ENCODE measurements at regions of chr9 and their contacts with region 1.

Region 1: DNA sequence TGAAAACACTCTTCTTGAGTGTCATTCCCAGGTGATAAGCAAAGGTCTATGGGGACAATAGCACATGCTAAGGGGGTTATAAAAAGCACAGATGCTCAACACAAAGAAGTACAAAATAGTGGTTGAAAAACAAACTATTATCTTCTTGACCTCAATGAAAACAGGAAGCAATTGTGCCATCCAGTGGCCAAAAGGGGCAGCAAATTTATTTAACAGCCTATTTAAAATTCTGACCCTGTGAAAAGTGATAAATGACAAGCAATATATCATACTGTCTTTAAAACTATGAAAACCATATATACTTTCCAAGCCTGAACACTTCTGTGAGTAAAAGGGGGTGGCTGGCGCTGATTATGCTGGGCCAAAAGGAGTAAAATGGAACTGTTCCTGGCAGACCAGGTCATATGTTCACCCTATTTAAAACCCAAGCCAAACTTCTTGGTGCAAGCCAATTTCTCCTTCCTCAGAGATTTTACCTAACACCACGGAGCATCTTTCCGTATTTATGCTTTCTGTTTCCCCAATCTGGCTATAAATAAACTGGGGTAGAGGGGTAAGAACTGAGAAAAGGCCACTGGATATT is 29.7 kb downstream of the TEX10 start:
- DNase-seq: peak; percentile 10
- ATAC-seq: no peak; the same call in 1 of the 2 replicates
- H3K4me3 ChIP-seq: no peak overlapping the region
- H3K27ac ChIP-seq: no peak overlapping the region
- H3K4me1 ChIP-seq: no peaks in the 10 kb centered on the region
- H3K27me3 ChIP-seq: no peaks in the 10 kb centered on the region
- CTCF ChIP-seq: peak; percentile 39 to 79 (median 69); a peak in 5 of 6 replicates
- POLR2A ChIP-seq: no peak
- RAD21 ChIP-seq: peak; percentile 41

Region 2: DNA sequence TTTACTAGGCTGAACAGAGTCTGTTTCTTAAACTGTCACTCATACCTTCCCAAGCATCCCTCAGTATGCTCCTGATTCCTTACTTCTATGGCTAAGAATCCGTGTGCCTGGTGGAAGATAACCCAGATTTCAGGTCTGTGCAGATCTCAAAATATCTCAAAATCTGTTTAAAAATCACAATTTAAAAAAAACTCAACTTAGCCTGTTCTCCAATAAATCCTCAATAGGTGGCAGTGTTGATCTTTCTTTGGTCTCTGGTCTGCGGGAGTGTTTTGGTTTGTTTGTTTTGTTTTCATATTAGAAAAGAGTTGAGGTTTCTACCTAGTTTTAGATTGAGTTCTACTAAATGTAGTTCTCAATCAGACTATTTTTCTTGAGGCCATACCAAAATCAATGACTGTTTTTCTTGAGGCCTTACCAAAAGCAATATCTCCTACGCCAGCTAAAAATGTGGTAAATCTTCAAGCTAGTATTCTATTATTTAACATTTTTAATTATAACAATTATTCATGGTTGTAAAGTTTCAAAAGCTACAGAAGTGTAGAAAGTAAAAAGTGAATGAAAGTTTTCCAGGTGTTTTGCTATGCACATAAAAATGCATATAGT is 1160.2 kb before region 1 on chr9:
- CTCF ChIA-PET with region 1: interaction called, 4 read pairs
- POLR2A ChIA-PET with region 1: no interaction called
- RAD21 ChIA-PET with region 1: no interaction called
- intact Hi-C with region 1: loop called (anchors 2 kb)
- DNase-seq: peak; percentile 22
- ATAC-seq: peak; percentile 57
- H3K4me3 ChIP-seq: no peak overlapping the region
- H3K27ac ChIP-seq: no peak overlapping the region
- H3K4me1 ChIP-seq: no peaks in the 10 kb centered on the region
- H3K27me3 ChIP-seq: no peaks in the 10 kb centered on the region
- CTCF ChIP-seq: peak; percentile 44 to 69 (median 64); a peak in 5 of 6 replicates
- POLR2A ChIP-seq: no peak
- RAD21 ChIP-seq: peak; percentile 82

Region 3: DNA sequence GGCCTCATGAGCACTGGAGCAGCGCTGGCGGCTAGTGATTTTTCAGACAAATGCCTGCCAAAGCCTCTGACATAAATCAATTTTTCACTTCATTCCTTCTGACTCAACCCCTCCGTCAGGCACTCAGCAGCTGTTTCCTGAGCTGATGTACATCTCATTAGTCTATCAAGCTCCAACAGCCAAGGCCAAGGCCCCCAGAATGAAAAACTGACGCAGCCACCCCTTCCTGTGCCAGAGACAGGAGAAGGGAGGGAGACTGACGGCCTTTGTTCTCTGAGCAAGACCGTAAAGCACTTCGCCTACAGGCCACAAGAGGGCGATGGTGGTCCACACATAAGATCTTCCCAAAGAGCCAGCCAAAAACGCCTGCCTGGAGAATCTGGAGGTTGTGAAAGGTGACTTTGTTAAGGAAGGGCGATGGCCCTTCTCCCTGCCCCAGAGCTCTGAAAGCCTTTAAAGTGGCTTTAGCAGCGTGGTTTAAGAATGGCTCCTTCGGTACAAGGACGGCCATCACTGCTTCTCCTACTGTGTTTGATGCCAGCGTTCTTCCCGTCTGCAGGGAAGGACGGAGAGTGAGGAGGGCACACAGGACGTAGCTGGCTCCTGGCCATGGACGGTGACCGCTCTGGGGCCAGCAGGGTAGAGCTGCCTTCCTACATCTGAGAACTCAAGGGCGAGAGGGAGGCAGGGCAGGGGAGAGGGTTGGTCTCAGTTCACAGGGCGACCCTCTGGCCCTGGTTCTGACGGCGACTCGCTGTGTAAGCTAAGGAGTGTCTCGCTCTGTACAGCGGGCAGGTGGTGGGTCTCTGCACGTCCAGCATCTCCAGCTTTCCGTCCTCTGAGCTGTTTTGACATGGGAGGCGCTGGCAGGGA is 1138.3 kb before region 1 on chr9:
- CTCF ChIA-PET with region 1: interaction called, 4 read pairs
- POLR2A ChIA-PET with region 1: no interaction called
- RAD21 ChIA-PET with region 1: no interaction called
- intact Hi-C with region 1: loop called (anchors 1 kb)
- DNase-seq: peak; percentile 74
- ATAC-seq: peak; percentile 94
- H3K4me3 ChIP-seq: no peak overlapping the region
- H3K27ac ChIP-seq: no peak overlapping the region
- H3K4me1 ChIP-seq: peaks cover 0 to 4% of the 10 kb centered on the region in 2 experiments; a peak in 1 of 4 replicates
- H3K27me3 ChIP-seq: peaks cover 6% of the 10 kb centered on the region; the same call in 1 of the 2 replicates
- CTCF ChIP-seq: peak; percentile 66 to 94 (median 91)
- POLR2A ChIP-seq: no peak
- RAD21 ChIP-seq: peak; percentile 88

Region 4: GRCh38 chr9:99266255-99267023 is 1056.6 kb before region 1 on chr9:
- CTCF ChIA-PET with region 1: no interaction called
- POLR2A ChIA-PET with region 1: no interaction called
- RAD21 ChIA-PET with region 1: no interaction called
- intact Hi-C with region 1: loop called (anchors 5 kb)
- DNase-seq: peak; percentile 69
- ATAC-seq: peak; percentile 95
- H3K4me3 ChIP-seq: peak overlapping the region in 1 of 2 experiments; percentile 7; a peak in 1 of 4 replicates
- H3K27ac ChIP-seq: no peak overlapping the region
- H3K4me1 ChIP-seq: peaks cover 0 to 15% of the 10 kb centered on the region in 2 experiments; a peak in 2 of 4 replicates
- H3K27me3 ChIP-seq: no peaks in the 10 kb centered on the region
- CTCF ChIP-seq: peak; percentile 76 to 97 (median 89)
- POLR2A ChIP-seq: no peak
- RAD21 ChIP-seq: peak; percentile 93

Region 5: GRCh38 chr9:100028201-100028784 is 294.8 kb before region 1 on chr9:
- CTCF ChIA-PET with region 1: no interaction called
- POLR2A ChIA-PET with region 1: no interaction called
- RAD21 ChIA-PET with region 1: no interaction called
- intact Hi-C with region 1: loop called (anchors 2 kb)
- DNase-seq: peak; percentile 60
- ATAC-seq: peak; percentile 100
- H3K4me3 ChIP-seq: no peak overlapping the region
- H3K27ac ChIP-seq: no peak overlapping the region
- H3K4me1 ChIP-seq: no peaks in the 10 kb centered on the region
- H3K27me3 ChIP-seq: no peaks in the 10 kb centered on the region
- CTCF ChIP-seq: peak; percentile 74 to 96 (median 92)
- POLR2A ChIP-seq: no peak
- RAD21 ChIP-seq: peak; percentile 82

Region 6: DNA sequence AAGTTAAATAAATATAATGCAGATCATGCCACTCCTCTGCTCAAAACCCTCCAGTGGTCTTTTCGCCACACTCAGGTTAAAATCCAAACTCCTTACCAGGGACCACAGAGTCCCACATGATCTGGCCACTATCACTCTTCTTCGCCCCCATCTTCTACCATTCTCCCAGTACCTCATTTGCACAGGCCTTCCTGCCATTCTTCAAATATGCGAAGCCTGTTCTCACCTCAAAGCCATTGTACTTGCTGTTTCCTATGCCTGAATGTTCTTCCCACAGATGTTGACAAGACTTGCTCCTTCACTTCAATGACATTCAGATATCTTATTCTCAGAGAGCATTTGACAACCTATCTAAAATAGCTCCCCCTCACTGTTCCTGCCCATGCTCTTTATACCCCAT is 18.8 kb after region 1 on chr9:
- CTCF ChIA-PET with region 1: interaction called, 17 read pairs
- POLR2A ChIA-PET with region 1: no interaction called
- RAD21 ChIA-PET with region 1: no interaction called
- intact Hi-C with region 1: no loop called
- DNase-seq: no peak
- ATAC-seq: no peak
- H3K4me3 ChIP-seq: no peak overlapping the region
- H3K27ac ChIP-seq: no peak overlapping the region
- H3K4me1 ChIP-seq: no peaks in the 10 kb centered on the region
- H3K27me3 ChIP-seq: no peaks in the 10 kb centered on the region
- CTCF ChIP-seq: no peak
- POLR2A ChIP-seq: no peak
- RAD21 ChIP-seq: no peak

Region 7: DNA sequence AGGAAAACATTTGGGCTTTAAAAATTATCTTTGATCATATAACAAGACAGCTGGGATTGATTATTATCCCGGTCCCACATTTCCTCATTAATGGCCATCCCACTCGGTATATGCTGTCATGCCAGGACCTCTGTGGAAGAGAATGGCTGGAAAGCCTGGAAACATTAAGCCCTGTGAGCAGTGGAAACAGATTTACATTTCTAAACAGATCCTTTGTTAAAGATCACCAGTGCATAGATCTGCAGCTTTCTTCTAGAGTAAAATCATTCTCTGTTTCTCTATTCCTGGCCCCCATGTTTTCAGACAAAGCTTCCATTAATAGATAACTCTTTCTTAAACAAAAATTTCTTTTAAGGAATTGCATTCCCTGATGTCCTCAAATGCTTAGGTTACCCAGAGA is 407.0 kb after region 1 on chr9:
- CTCF ChIA-PET with region 1: no interaction called
- POLR2A ChIA-PET with region 1: no interaction called
- RAD21 ChIA-PET with region 1: no interaction called
- intact Hi-C with region 1: no loop called
- DNase-seq: no peak
- ATAC-seq: no peak
- H3K4me3 ChIP-seq: no peak overlapping the region
- H3K27ac ChIP-seq: no peak overlapping the region
- H3K4me1 ChIP-seq: no peaks in the 10 kb centered on the region
- H3K27me3 ChIP-seq: peaks cover 14% of the 10 kb centered on the region
- CTCF ChIP-seq: no peak
- POLR2A ChIP-seq: no peak
- RAD21 ChIP-seq: no peak